ENCODE measurements at regions of chr5 and their contacts with region 1.

Region 1: DNA sequence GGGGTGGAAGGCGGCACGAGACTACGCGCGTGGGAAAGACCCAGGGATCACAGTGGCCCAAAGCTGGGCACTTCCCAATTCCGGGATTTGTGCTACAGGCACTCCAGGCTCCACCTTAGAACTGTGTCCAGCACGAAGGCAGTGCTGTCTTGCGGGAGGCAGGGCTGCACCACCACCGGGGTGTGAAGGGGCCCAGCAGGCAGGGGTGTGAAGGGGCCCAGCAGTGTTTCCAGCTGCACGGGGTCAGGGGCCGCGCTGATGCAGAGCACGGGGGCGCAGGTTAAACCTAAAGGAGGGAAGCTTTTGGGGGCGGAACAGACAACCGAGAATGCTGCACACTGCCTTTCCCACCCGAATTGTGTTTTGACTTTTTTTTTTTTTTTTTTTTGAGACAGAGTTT is 1.1 kb upstream of the PDCD6 start:
- DNase-seq: no peak
- H3K4me3 ChIP-seq: peak overlapping the region in 1 of 3 experiments; percentile 88
- H3K4me3 Mint-ChIP-seq: peak overlapping the region; percentile 94 to 99
- H3K27ac ChIP-seq: no peak overlapping the region
- H3K27ac Mint-ChIP-seq: peak overlapping the region in 4 of 7 donors; percentile 25 to 97 (median 75)
- H3K4me1 ChIP-seq: peaks cover 15% of the 10 kb centered on the region in 2 donors
- H3K4me1 Mint-ChIP-seq: peaks cover 16% of the 10 kb centered on the region
- H3K27me3 ChIP-seq: no peaks in the 10 kb centered on the region
- H3K27me3 Mint-ChIP-seq: peaks cover 0 to 2% (median 0%) of the 10 kb centered on the region in 3 donors
- CTCF ChIP-seq: no peak

Region 2: GRCh38 chr5:217860-218456 is 52.4 kb before region 1 on chr5 and contains the starts of genes CCDC127 and SDHA:
- intact Hi-C with region 1: loop called (anchors 2 to 5 kb)
- DNase-seq: peak; percentile 92 to 94 (median 92)
- H3K4me3 ChIP-seq: peak within 1 kb of the TSS; percentile 84 to 97 (median 95)
- H3K4me3 Mint-ChIP-seq: peak within 1 kb of the TSS; percentile 96 to 98
- H3K27ac ChIP-seq: peak within 1 kb of the TSS; percentile 44 to 81
- H3K27ac Mint-ChIP-seq: peak within 1 kb of the TSS; percentile 73 to 90 (median 86)
- H3K4me1 ChIP-seq: peaks cover 25 to 26% of the 10 kb centered on the region in 2 donors
- H3K4me1 Mint-ChIP-seq: peaks cover 48% of the 10 kb centered on the region
- H3K27me3 ChIP-seq: no peaks in the 10 kb centered on the region
- H3K27me3 Mint-ChIP-seq: no peaks in the 10 kb centered on the region
- CTCF ChIP-seq: no peak
- polyA plus RNA-seq, gene CCDC127: 0.68 to 1.5 (median 0.85) TPM
- polyA plus RNA-seq, gene SDHA: 55.0 to 98.0 (median 91.5) TPM